Motor neuron (in vitro differentiated cells): ENCODE measurements at regions of chr1 and their contacts with region 1.

Region 1: GRCh38 chr1:211654838-211655787 is 20.3 kb downstream of the NEK2 start:
- ATAC-seq: peak; percentile 87 to 95 (median 91)
- H3K4me3 ChIP-seq: no peak overlapping the region
- H3K27ac ChIP-seq: no peak overlapping the region
- H3K4me1 ChIP-seq: peaks cover 13% of the 10 kb centered on the region in 2 donors

Region 2: DNA sequence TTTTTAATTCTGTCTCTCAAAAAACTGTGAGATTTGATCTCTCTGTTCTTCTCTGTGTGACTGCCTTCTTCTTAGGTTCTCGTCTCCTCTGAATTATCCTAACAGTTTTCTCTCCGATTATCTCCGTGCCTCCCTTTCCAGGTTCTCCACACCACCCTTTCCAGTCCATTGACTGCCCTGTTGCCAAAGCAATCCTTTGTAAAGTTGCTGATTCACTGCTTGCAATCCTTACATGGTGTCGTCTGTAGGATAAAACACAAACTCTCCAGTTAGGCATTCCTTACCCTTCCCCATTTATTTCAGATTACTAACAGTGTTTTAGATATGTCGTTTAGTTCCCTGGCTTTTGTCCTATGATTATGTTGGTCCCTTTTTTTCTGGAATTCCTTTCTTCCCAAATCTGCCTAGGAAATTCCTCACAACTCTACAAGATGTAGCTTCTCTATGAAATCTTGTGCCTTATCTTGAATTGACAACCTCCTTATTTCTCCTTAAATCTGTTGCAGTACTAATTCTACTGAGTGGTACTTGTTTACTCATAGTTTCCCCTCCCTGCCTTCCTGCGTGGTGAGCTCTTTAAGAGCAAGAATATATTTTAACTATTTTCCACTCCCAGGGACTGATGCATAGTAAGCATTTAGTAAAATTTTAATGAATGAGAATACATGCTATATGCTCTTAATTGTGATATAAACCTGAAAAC is 373.6 kb before region 1 on chr1:
- in situ Hi-C with region 1: no loop called
- ATAC-seq: peak in 5 of 8 experiments; percentile 29 to 61 (median 46)
- H3K4me3 ChIP-seq: no peak overlapping the region
- H3K27ac ChIP-seq: peak overlapping the region in 1 of 2 donors; percentile 25
- H3K4me1 ChIP-seq: no peaks in the 10 kb centered on the region

Region 3: DNA sequence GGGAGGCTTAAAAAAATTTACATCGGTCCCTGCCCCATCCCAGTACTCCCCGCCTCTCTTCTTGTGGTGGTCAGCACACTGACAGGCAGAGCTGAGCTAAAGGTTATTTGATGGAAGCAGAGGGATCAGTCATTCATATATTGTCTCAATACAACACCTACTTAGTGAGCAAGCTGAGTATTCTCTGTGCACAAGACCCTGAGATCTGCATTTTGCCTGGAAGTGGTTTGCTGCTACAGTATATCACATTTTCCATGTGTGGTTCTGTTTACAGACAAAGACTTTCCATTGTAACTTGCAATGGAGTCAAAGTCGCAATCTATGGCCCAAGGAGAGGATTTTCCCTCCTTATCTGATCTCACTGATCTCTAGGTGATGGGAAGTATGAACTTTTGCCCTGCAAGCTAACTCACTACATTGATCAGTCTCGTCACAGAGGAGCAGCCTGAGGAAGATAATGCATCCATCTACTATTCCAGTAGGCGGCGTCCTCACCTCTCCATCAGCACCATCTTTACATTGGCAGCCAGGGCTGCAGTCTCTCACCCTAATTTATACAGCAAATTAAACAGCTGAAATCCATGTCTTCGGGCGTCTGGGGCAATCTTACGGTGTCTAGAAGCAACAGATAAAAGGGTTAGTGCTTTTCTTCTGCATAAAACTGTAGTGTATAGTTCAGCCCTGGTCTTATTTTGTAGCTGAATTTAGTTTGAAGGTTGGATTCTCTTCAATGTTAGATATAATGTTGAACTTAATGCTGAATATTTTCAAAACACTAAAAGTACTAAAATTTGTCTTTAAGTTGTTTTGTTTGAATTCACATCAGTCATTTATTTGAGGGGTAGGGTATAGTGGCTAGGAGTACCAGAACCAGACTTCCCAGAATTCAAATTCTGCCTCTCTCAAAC is 331.7 kb before region 1 on chr1:
- in situ Hi-C with region 1: loop called in 4 of 9 experiments (anchors 25 kb)
- ATAC-seq: peak; percentile 46 to 73 (median 61)
- H3K4me3 ChIP-seq: no peak overlapping the region
- H3K27ac ChIP-seq: no peak overlapping the region
- H3K4me1 ChIP-seq: peaks cover 2 to 12% of the 10 kb centered on the region in 2 donors

Region 4: GRCh38 chr1:211492511-211493132 is 162.5 kb before region 1 on chr1:
- in situ Hi-C with region 1: no loop called
- ATAC-seq: peak in 5 of 8 experiments; percentile 0 to 17 (median 3)
- H3K4me3 ChIP-seq: no peak overlapping the region
- H3K27ac ChIP-seq: peak overlapping the region in 1 of 2 donors; percentile 18
- H3K4me1 ChIP-seq: peaks cover 26 to 33% of the 10 kb centered on the region in 2 donors

Region 5: DNA sequence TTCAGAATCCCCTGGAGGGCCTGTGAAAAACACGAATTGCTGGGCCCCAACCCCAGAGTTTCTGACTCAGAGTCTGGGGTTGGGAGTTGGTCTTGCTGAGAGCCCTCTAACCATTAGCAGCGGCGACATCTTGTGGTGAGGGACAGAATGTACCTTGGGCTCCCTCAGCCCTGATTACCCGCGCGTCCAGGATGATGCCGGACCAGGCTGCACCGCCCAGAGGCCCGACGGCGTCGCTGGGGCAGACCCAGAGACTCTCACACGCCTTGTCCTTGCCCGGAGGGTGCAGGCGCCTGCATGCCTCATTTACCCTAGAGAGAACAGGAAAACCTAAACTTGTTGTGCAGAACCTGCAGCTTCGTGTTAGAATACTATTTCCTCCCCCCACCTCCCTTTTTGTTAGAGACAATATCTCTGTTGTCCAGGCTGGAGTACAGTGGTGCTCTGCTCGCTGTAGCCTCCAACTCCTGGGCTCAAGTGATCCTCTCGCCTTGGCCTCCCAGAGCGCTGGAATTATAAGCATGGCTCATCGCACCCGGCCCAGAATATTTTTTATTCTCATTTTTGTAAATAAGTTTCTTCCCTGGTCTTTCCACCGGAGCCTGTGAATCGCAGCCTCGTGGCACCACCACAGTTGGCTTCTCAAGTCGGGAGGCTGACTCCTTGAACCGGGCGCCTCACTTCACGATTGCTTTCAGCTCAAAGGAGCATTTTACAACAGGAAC is 140.9 kb before region 1 on chr1:
- in situ Hi-C with region 1: loop called in 3 of 9 experiments (anchors 10 to 25 kb)
- ATAC-seq: peak; percentile 69 to 88 (median 77)
- H3K4me3 ChIP-seq: no peak overlapping the region
- H3K27ac ChIP-seq: no peak overlapping the region
- H3K4me1 ChIP-seq: peaks cover 0 to 5% of the 10 kb centered on the region in 2 donors

Region 6: GRCh38 chr1:211578640-211579433 is 76.3 kb before region 1 on chr1 and contains the start of gene SLC30A1:
- in situ Hi-C with region 1: loop called in 1 of 9 experiments (anchors 10 kb)
- ATAC-seq: peak; percentile 81 to 95 (median 93)
- H3K4me3 ChIP-seq: peak within 1 kb of the TSS; percentile 69 to 96 (median 83)
- H3K27ac ChIP-seq: peak within 1 kb of the TSS; percentile 46 to 72
- H3K4me1 ChIP-seq: peaks cover 10 to 11% of the 10 kb centered on the region in 2 donors
- total RNA-seq, gene SLC30A1: 7.0 to 50.3 (median 17.3) TPM

Region 7: GRCh38 chr1:211753649-211754251 is 98.6 kb after region 1 on chr1:
- in situ Hi-C with region 1: no loop called
- ATAC-seq: no peak
- H3K4me3 ChIP-seq: no peak overlapping the region
- H3K27ac ChIP-seq: no peak overlapping the region
- H3K4me1 ChIP-seq: no peaks in the 10 kb centered on the region

Region 8: GRCh38 chr1:211775170-211775569 is 120.1 kb after region 1 on chr1:
- in situ Hi-C with region 1: no loop called
- ATAC-seq: peak in 7 of 8 experiments; percentile 52 to 73 (median 66)
- H3K4me3 ChIP-seq: no peak overlapping the region
- H3K27ac ChIP-seq: no peak overlapping the region
- H3K4me1 ChIP-seq: peaks cover 0 to 2% of the 10 kb centered on the region in 2 donors